Activated T-helper 1 cell treated with anti-CD3 and anti-CD28 coated beads, Interleukin-12 subunit alpha, Interleukin-12 subunit beta, Interleukin-2, Interleukin-4 antibody, amounts not matched to agents 30 ng/mL and 10 ng/mL and 1 ng/mL, durations not matched to agents 14 hours and 24 hours and 36 hours (primary cell): ENCODE measurements at regions of chr1 and their contacts with region 1.

Region 1: DNA sequence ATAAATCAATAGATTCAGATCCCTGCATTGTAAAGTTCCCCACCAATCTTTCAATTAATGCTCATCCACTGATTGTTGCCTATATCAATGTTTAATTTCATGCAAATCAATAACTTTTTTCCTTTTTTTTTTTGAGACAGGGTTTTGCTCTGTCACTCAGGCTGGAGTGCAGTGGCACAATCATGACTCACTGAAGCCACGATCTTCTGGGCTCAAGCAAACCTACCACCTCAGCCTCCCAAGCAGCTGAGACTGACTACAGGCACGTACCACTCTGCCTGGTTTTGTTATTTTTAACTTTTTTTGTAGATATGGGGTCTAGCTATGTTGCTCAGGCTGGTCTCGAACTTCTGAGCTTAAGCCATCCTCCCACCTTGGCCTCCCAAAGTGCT is 25.7 kb downstream of the DIO1 start:
- DNase-seq: no peak
- H3K4me3 Mint-ChIP-seq: no peak overlapping the region
- H3K27ac Mint-ChIP-seq: peak overlapping the region; percentile 90
- H3K4me1 Mint-ChIP-seq: peaks cover 48% of the 10 kb centered on the region
- H3K27me3 Mint-ChIP-seq: no peaks in the 10 kb centered on the region

Region 2: GRCh38 chr1:53889304-53890298 is 30.1 kb before region 1 on chr1 and contains the start of gene YIPF1:
- intact Hi-C with region 1: loop called (anchors 1 kb)
- DNase-seq: peak; percentile 89
- H3K4me3 Mint-ChIP-seq: peak within 1 kb of the TSS; percentile 98
- H3K27ac Mint-ChIP-seq: peak within 1 kb of the TSS; percentile 96
- H3K4me1 Mint-ChIP-seq: peaks cover 26% of the 10 kb centered on the region
- H3K27me3 Mint-ChIP-seq: no peaks in the 10 kb centered on the region
- total RNA-seq, gene YIPF1: 14.7 and 15.2 TPM in 2 replicates